Activated CD4-positive, alpha-beta T cell treated with anti-CD3 and anti-CD28 coated beads for 36 hours (primary cell): ENCODE measurements at regions of chr1 and their contacts with region 1.

Region 1: GRCh38 chr1:154878371-154879022 is 8.4 kb upstream of the KCNN3 start:
- DNase-seq: peak; percentile 87
- ATAC-seq: peak; percentile 95
- H3K4me3 Mint-ChIP-seq: no peak overlapping the region
- H3K27ac Mint-ChIP-seq: no peak overlapping the region
- H3K4me1 Mint-ChIP-seq: peaks cover 10% of the 10 kb centered on the region
- H3K27me3 Mint-ChIP-seq: peaks cover 4% of the 10 kb centered on the region

Region 2: GRCh38 chr1:154669464-154670282 is 208.8 kb before region 1 on chr1:
- CTCF ChIA-PET with region 1: interaction called, 27 read pairs
- POLR2A ChIA-PET with region 1: no interaction called
- intact Hi-C with region 1: loop called (anchors 1 kb)
- DNase-seq: peak; percentile 88
- ATAC-seq: peak; percentile 100
- H3K4me3 Mint-ChIP-seq: no peak overlapping the region
- H3K27ac Mint-ChIP-seq: no peak overlapping the region
- H3K4me1 Mint-ChIP-seq: peaks cover 17% of the 10 kb centered on the region
- H3K27me3 Mint-ChIP-seq: peaks cover 2% of the 10 kb centered on the region

Region 3: DNA sequence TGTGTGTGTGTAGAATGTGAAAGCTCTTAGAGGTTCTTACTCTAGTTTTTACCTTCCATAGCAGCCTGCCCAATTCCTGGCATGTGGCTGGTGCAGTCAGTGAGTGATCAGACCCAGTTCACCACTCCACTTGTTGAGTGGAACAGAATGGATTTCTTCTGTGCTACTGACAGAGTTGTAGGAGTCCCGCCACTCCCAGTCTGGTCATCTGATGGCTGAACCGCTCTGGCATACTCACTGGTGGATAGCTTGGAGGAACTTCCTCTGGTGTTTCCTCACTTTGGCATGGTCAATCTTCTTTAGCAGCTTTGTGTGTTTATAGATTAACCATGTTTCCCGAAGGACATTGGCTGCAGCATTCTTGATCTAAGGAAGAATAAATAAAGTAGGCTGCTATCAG is 163.9 kb before region 1 on chr1:
- CTCF ChIA-PET with region 1: no interaction called
- POLR2A ChIA-PET with region 1: no interaction called
- intact Hi-C with region 1: no loop called
- DNase-seq: peak; percentile 32
- ATAC-seq: peak; percentile 71
- H3K4me3 Mint-ChIP-seq: no peak overlapping the region
- H3K27ac Mint-ChIP-seq: no peak overlapping the region
- H3K4me1 Mint-ChIP-seq: peaks cover 3% of the 10 kb centered on the region
- H3K27me3 Mint-ChIP-seq: no peaks in the 10 kb centered on the region

Region 4: GRCh38 chr1:154772606-154773506 is 105.6 kb before region 1 on chr1:
- CTCF ChIA-PET with region 1: interaction called, 4 read pairs
- POLR2A ChIA-PET with region 1: no interaction called
- intact Hi-C with region 1: loop called (anchors 1 to 5 kb)
- DNase-seq: peak; percentile 62
- ATAC-seq: peak; percentile 46
- H3K4me3 Mint-ChIP-seq: no peak overlapping the region
- H3K27ac Mint-ChIP-seq: no peak overlapping the region
- H3K4me1 Mint-ChIP-seq: peaks cover 13% of the 10 kb centered on the region
- H3K27me3 Mint-ChIP-seq: no peaks in the 10 kb centered on the region

Region 5: DNA sequence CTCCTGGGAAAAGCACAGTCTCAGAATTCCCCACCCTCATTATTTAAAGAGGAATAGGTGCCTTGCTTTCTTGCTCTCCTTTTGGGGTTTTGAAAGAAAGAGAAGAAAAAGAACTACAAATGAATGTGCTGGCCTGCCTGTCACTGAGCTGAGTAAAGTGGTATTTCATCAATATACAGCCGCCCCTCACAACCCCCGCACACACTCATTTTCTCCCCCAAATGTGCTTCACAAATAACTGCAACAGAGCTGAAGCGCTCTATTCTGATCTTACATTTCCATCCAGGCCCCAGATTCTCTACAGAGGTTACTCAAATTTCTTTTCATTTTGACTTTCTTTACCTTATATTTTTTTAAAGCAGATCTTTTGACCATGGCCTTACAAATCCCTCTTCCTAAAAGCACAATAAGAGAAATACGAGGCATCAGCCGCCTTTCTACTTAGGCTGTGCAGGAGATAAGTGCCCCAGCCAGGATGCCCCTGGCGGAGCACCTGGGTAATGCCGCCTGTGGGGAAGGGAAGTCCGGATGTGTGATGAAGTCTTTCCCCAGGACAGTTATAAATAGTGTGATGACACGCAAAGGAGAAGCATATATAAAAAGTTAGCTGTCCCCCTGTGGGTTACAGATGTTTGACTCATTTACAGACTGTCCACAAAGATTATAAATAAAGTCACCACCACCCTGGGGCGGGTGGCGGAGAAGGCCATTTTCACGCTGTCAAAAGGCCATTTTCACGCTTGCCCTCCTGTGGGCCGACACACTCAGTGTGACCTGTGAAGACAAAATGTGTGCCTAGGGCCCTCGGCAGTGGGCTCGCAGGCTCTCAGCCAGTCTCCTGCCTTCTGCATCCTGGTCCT is 15.0 kb before region 1 on chr1:
- CTCF ChIA-PET with region 1: interaction called, 5 read pairs
- POLR2A ChIA-PET with region 1: interaction called, 12 read pairs
- intact Hi-C with region 1: no loop called
- DNase-seq: peak; percentile 61
- ATAC-seq: peak; percentile 74
- H3K4me3 Mint-ChIP-seq: no peak overlapping the region
- H3K27ac Mint-ChIP-seq: peak overlapping the region; percentile 45
- H3K4me1 Mint-ChIP-seq: peaks cover 36% of the 10 kb centered on the region
- H3K27me3 Mint-ChIP-seq: peaks cover 17% of the 10 kb centered on the region

Region 6: GRCh38 chr1:154891452-154891851 is 13.0 kb after region 1 on chr1:
- CTCF ChIA-PET with region 1: interaction called, 18 read pairs
- POLR2A ChIA-PET with region 1: no interaction called
- intact Hi-C with region 1: no loop called
- DNase-seq: no peak
- ATAC-seq: no peak
- H3K4me3 Mint-ChIP-seq: no peak overlapping the region
- H3K27ac Mint-ChIP-seq: no peak overlapping the region
- H3K4me1 Mint-ChIP-seq: peaks cover under 1% of the 10 kb centered on the region
- H3K27me3 Mint-ChIP-seq: no peaks in the 10 kb centered on the region